SK-N-SH (cell line): ENCODE measurements at regions of chr11 and their contacts with region 1.

Region 1: DNA sequence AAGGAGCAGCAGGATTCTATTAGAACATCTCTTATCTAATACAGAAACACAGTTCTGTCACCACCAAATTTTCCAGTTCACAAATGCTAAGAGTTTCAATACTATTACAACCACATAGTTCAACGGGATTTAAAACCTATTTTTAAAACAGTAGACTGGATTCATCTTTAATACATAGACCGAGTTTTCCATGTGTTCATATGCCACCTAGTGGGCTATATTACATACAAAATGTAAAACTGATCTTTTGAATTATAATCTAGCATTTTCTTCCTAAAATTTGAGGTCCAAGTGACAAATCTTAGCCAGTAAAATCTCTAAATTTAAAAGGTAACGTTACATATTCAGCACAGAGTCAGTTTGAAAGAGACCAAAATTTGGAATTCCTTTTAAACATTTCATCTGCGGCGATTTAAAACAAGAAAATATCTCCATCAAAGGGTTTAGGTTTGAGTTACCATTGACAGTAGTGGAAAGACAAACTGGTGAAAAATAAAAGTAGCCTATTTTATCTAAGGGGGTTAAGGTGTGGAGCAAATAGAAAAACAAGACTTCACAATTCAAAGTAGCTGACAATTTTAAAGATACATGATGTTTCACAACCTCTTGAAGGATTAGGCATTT is 269.3 kb upstream of the MPPED2 start:
- DNase-seq: peak; percentile 12
- H3K4me3 ChIP-seq: no peak overlapping the region
- H3K27ac ChIP-seq: no peak overlapping the region
- H3K4me1 ChIP-seq: peaks cover 0 to 12% of the 10 kb centered on the region in 2 experiments; a peak in 3 of 4 replicates
- H3K27me3 ChIP-seq: no peaks in the 10 kb centered on the region
- CTCF ChIP-seq: peak; percentile 54
- EP300 ChIP-seq: no peak
- RAD21 ChIP-seq: peak; percentile 76

Region 2: GRCh38 chr11:30322826-30323710 is 532.4 kb before region 1 on chr11 and contains the start of gene ARL14EP:
- CTCF ChIA-PET with region 1: interaction called, 3 read pairs
- POLR2A ChIA-PET with region 1: interaction called, 12 read pairs
- DNase-seq: peak; percentile 89
- H3K4me3 ChIP-seq: peak within 1 kb of the TSS; percentile 73 to 89
- H3K27ac ChIP-seq: peak within 1 kb of the TSS; percentile 74 to 78
- H3K4me1 ChIP-seq: peaks cover 12 to 25% of the 10 kb centered on the region in 2 experiments; a peak in 3 of 4 replicates
- H3K27me3 ChIP-seq: no peaks in the 10 kb centered on the region
- CTCF ChIP-seq: no peak
- EP300 ChIP-seq: peak in 1 of 2 experiments; percentile 64; a peak in 1 of 4 replicates
- RAD21 ChIP-seq: no peak
- polyA plus RNA-seq, gene ARL14EP: 7.0 and 11.2 TPM in 2 replicates

Region 3: DNA sequence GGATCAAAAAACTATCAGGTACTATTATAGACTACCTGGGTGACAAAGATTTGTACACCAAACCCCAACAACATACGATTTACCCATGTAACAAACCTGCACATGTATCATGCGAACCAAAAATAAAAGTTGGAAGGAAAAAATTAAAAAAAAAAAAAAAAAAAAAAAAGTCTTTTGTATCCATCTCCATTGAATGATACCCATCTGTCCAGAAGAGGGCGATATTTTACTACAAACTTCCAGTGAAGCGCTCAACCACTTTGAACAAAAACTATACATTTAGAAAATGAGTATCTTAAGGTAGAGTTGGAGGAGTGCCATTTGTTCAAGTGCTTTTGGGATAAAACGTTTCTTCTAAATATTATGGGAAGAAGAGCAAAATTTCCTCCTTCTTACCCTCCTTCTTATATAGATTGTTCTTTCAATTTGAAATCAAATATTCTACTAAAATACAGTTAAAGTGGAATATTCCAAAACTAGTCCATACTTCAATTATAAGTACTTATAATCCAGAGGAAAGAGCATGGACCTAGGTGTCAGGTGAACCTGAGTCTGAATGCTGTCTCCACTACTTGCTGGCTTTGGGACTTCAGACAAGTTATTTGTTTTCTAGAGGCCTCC is 509.3 kb before region 1 on chr11:
- CTCF ChIA-PET with region 1: interaction called, 30 read pairs
- POLR2A ChIA-PET with region 1: no interaction called
- DNase-seq: peak; percentile 43
- H3K4me3 ChIP-seq: no peak overlapping the region
- H3K27ac ChIP-seq: no peak overlapping the region
- H3K4me1 ChIP-seq: no peaks in the 10 kb centered on the region; a peak in 1 of 4 replicates
- H3K27me3 ChIP-seq: no peaks in the 10 kb centered on the region
- CTCF ChIP-seq: peak; percentile 74
- EP300 ChIP-seq: no peak
- RAD21 ChIP-seq: peak; percentile 85